ENCODE measurements at regions of chr18 and their contacts with region 1.

Region 1: GRCh38 chr18:22831441-22831904 is 101.7 kb upstream of the RBBP8 start:
- DNase-seq: peak; percentile 91
- ATAC-seq: peak; percentile 85
- H3K4me3 ChIP-seq: no peak overlapping the region
- H3K27ac ChIP-seq: no peak overlapping the region; the same call in 1 of the 2 replicates
- H3K4me1 ChIP-seq: peaks cover 6% of the 10 kb centered on the region
- H3K27me3 ChIP-seq: no peaks in the 10 kb centered on the region
- CTCF ChIP-seq: no peak
- POLR2A ChIP-seq: no peak
- RAD21 ChIP-seq: 0 out of 2 replicates have a peak, but pooled peaks have one; percentile 7

Region 2: GRCh38 chr18:22667616-22668422 is 163.7 kb before region 1 on chr18:
- CTCF ChIA-PET with region 1: no interaction called
- POLR2A ChIA-PET with region 1: no interaction called
- dilution Hi-C with region 1: no loop called
- in situ Hi-C with region 1: no loop called
- intact Hi-C with region 1: no loop called
- DNase-seq: peak; percentile 99
- ATAC-seq: peak; percentile 93
- H3K4me3 ChIP-seq: no peak overlapping the region
- H3K27ac ChIP-seq: peak overlapping the region; percentile 74; the same call in 1 of the 2 replicates
- H3K4me1 ChIP-seq: peaks cover 21% of the 10 kb centered on the region
- H3K27me3 ChIP-seq: no peaks in the 10 kb centered on the region
- CTCF ChIP-seq: no peak
- POLR2A ChIP-seq: no peak
- RAD21 ChIP-seq: peak; percentile 2; the same call in 1 of the 2 replicates

Region 3: DNA sequence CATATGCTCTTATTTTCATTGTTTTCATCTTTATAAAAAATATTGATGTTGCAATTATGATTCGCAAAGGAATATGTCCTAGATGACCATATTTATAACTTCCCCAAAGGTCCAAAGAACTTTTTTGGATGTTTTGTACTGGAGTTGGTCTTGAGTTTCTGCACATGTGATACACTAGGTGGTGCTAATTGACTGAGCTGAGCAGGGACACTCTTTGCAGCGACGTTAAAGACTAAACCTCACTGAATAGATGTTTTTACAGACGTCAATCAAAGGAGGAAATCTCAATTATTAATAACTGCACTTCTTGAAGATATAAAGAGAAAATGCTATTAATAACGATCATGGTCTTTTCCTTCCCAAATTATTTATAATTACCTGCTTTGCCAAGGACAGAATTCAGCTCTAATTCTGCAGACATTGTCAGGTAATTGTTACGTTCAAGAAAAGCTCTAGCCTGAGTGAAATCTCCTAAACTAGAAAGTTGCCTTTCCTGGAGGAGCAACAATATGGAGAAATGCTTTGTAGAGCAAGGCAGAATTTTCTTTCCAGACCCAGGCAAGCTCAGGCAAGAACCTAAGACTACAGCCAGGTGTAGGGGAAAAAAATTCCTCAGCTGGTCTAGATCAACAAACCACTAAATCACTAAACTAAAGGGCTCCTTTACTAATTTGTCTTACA is 17.7 kb before region 1 on chr18:
- CTCF ChIA-PET with region 1: no interaction called
- POLR2A ChIA-PET with region 1: no interaction called
- dilution Hi-C with region 1: no loop called
- in situ Hi-C with region 1: no loop called
- intact Hi-C with region 1: no loop called
- DNase-seq: peak; percentile 65
- ATAC-seq: peak; percentile 86
- H3K4me3 ChIP-seq: no peak overlapping the region
- H3K27ac ChIP-seq: no peak overlapping the region
- H3K4me1 ChIP-seq: no peaks in the 10 kb centered on the region
- H3K27me3 ChIP-seq: no peaks in the 10 kb centered on the region
- CTCF ChIP-seq: peak; percentile 85
- POLR2A ChIP-seq: peak; percentile 52; the same call in 1 of the 2 replicates
- RAD21 ChIP-seq: peak; percentile 96

Region 4: GRCh38 chr18:22883179-22883578 is 51.7 kb after region 1 on chr18:
- CTCF ChIA-PET with region 1: no interaction called
- POLR2A ChIA-PET with region 1: no interaction called
- dilution Hi-C with region 1: no loop called
- in situ Hi-C with region 1: no loop called
- intact Hi-C with region 1: no loop called
- DNase-seq: no peak
- ATAC-seq: no peak
- H3K4me3 ChIP-seq: no peak overlapping the region
- H3K27ac ChIP-seq: no peak overlapping the region
- H3K4me1 ChIP-seq: no peaks in the 10 kb centered on the region; the same call in 1 of the 2 replicates
- H3K27me3 ChIP-seq: peaks cover 2% of the 10 kb centered on the region; the same call in 1 of the 2 replicates
- CTCF ChIP-seq: no peak
- POLR2A ChIP-seq: no peak
- RAD21 ChIP-seq: no peak

Region 5: GRCh38 chr18:23020555-23021294 is 189.3 kb after region 1 on chr18:
- CTCF ChIA-PET with region 1: interaction called, 12 read pairs
- POLR2A ChIA-PET with region 1: no interaction called
- dilution Hi-C with region 1: no loop called
- in situ Hi-C with region 1: no loop called
- intact Hi-C with region 1: no loop called
- DNase-seq: no peak
- ATAC-seq: no peak
- H3K4me3 ChIP-seq: no peak overlapping the region
- H3K27ac ChIP-seq: no peak overlapping the region
- H3K4me1 ChIP-seq: no peaks in the 10 kb centered on the region
- H3K27me3 ChIP-seq: no peaks in the 10 kb centered on the region
- CTCF ChIP-seq: no peak
- POLR2A ChIP-seq: no peak
- RAD21 ChIP-seq: no peak